ENCODE measurements at regions of chr5 and their contacts with region 1.

Region 1: GRCh38 chr5:178113199-178113787 is at the start of gene N4BP3:
- DNase-seq: peak; percentile 60 to 91 (median 81)
- ATAC-seq: peak; percentile 44
- H3K4me3 ChIP-seq: peak within 1 kb of the TSS; percentile 54 to 88
- H3K4me3 Mint-ChIP-seq: peak within 1 kb of the TSS; percentile 90
- H3K27ac ChIP-seq: peak within 1 kb of the TSS; percentile 45 to 51
- H3K27ac Mint-ChIP-seq: peak within 1 kb of the TSS; percentile 93
- H3K4me1 ChIP-seq: peaks cover 45% of the 10 kb centered on the region
- H3K4me1 Mint-ChIP-seq: peaks cover 42% of the 10 kb centered on the region
- H3K27me3 ChIP-seq: no peaks in the 10 kb centered on the region
- H3K27me3 Mint-ChIP-seq: no peaks in the 10 kb centered on the region
- CTCF ChIP-seq: no peak
- total RNA-seq, gene N4BP3: 17.3 to 17.9 TPM

Region 2: DNA sequence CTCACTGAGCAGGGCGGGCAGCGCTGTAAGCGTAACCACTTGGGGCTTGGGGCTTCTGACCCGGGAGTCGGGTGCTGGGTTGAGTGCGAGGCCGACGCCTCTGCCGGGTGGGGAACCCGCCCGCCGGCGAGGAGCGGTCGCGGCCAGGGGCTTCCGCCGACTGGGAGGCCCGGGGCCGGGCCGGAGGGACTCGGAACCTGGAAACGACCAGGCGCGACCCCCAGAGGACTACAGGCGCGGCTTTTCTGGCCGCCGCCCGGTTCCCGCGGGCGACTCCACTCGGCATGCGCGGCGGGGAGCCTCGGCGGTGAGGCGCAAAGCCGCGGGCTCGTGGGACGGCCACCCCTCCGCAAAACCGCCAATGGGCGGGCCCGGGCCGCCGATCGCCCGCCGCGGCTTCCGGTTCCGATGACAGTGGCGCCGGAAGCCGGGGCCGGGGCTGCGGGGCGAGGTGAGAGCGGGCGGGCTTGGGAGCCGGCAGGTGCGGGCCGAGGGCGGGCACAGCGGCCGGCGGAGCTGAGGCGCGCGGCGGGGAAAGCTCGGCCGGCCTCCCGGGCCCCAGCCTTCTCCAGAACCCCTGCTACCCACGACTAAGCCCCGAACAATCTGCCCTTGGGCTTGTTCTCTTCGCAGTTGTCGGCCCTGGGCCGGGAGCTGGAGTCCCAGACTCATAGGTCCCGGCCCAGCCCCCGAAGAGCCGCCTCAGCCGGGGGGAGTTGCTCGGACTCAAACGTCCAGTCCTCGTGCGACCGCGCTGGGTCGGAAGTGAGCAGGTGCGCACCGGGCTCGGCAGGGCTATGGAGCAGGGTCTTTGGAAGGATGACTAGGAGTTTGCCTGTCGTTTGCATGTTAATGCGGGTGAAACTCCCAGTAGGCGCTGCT is 17.6 kb after region 1 on chr5 and contains the start of gene RMND5B:
- CTCF ChIA-PET with region 1: no interaction called
- POLR2A ChIA-PET with region 1: interaction called, 3 read pairs
- intact Hi-C with region 1: loop called (anchors 1 kb)
- DNase-seq: peak; percentile 56 to 88 (median 76)
- ATAC-seq: peak; percentile 82
- H3K4me3 ChIP-seq: peak within 1 kb of the TSS; percentile 66 to 85
- H3K4me3 Mint-ChIP-seq: peak within 1 kb of the TSS; percentile 83
- H3K27ac ChIP-seq: peak within 1 kb of the TSS; percentile 66 to 69
- H3K27ac Mint-ChIP-seq: peak within 1 kb of the TSS; percentile 75
- H3K4me1 ChIP-seq: peaks cover 20% of the 10 kb centered on the region
- H3K4me1 Mint-ChIP-seq: peaks cover 33% of the 10 kb centered on the region
- H3K27me3 ChIP-seq: no peaks in the 10 kb centered on the region
- H3K27me3 Mint-ChIP-seq: no peaks in the 10 kb centered on the region
- CTCF ChIP-seq: no peak
- total RNA-seq, gene RMND5B: 9.3 to 12.6 TPM

Region 3: GRCh38 chr5:178668605-178669004 is 555.3 kb after region 1 on chr5:
- CTCF ChIA-PET with region 1: no interaction called
- POLR2A ChIA-PET with region 1: no interaction called
- intact Hi-C with region 1: no loop called
- DNase-seq: no peak
- ATAC-seq: no peak
- H3K4me3 ChIP-seq: no peak overlapping the region
- H3K4me3 Mint-ChIP-seq: no peak overlapping the region
- H3K27ac ChIP-seq: no peak overlapping the region
- H3K27ac Mint-ChIP-seq: no peak overlapping the region
- H3K4me1 ChIP-seq: no peaks in the 10 kb centered on the region
- H3K4me1 Mint-ChIP-seq: no peaks in the 10 kb centered on the region
- H3K27me3 ChIP-seq: no peaks in the 10 kb centered on the region
- H3K27me3 Mint-ChIP-seq: peaks cover 14% of the 10 kb centered on the region
- CTCF ChIP-seq: no peak